Left cardiac atrium (tissue), 4 donors: ENCODE measurements at regions of chr6 and their contacts with region 1.

Region 1: DNA sequence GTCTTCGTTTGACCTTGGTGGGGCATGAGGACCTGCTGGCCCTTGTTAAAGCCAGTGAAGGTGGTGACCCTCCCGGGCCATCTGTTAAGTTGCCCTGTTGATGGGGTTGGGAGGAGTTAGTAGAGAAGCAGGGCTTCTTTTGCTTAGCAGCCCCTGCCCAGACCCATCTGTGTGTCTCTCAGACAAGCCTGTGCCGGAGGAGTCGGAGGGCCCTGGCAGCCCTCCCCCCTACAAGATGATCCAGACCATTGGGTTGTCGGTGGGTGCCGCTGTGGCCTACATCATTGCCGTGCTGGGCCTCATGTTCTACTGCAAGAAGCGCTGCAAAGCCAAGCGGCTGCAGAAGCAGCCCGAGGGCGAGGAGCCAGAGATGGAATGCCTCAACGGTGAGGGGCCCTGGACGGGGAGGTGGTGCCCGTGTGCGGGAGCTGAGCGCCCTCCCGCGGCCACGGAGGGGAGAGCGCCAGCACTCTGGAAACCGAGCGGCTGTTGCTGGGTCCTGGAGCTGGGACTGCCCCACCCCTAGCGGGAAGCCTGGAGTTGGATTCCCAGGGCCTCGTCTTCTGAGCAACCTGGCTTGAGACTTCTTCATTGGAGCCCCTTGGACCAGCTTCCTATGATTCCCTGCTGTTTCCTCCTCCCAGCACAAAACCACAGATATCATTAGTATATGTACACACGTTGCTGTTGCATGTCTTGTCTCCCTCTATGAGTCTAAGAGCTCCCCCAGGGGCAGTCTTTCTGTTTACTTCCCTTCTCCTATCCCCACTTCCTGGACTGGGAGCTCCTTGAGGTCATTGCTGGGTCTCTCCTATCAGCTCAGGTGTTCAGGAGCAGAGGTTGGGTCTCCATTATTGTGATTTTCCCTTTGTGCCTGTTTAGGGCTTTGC is 27.6 kb upstream of the SRF start:
- DNase-seq: peak; percentile 91
- ATAC-seq: peak; percentile 97

Region 2: GRCh38 chr6:42901536-42901957 is 241.9 kb before region 1 on chr6:
- intact Hi-C with region 1: loop called (anchors 2 to 5 kb)
- DNase-seq: peak; percentile 87
- ATAC-seq: peak; percentile 97 to 98

Region 3: GRCh38 chr6:42907336-42907735 is 236.1 kb before region 1 on chr6:
- intact Hi-C with region 1: loop called in 1 of 2 experiments (anchors 5 kb)
- DNase-seq: no peak
- ATAC-seq: peak; percentile 52 to 66

Region 4: DNA sequence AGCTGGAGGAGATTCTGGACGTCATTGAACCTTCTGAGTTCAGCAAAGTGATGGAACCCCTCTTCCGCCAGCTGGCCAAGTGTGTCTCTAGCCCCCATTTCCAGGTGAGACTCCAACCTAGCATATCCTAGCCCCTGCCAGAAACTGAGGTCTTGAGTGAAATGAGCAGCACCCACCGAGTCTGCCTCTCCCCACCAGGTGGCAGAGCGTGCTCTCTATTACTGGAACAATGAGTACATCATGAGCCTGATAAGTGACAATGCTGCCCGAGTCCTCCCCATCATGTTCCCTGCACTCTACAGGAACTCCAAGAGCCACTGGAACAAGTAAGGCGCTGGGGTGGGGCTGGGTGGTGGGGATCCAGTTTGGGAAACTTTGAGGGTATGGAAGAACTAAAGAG is 134.4 kb before region 1 on chr6:
- intact Hi-C with region 1: loop called (anchors 1 to 5 kb)
- DNase-seq: peak; percentile 54
- ATAC-seq: no peak

Region 5: DNA sequence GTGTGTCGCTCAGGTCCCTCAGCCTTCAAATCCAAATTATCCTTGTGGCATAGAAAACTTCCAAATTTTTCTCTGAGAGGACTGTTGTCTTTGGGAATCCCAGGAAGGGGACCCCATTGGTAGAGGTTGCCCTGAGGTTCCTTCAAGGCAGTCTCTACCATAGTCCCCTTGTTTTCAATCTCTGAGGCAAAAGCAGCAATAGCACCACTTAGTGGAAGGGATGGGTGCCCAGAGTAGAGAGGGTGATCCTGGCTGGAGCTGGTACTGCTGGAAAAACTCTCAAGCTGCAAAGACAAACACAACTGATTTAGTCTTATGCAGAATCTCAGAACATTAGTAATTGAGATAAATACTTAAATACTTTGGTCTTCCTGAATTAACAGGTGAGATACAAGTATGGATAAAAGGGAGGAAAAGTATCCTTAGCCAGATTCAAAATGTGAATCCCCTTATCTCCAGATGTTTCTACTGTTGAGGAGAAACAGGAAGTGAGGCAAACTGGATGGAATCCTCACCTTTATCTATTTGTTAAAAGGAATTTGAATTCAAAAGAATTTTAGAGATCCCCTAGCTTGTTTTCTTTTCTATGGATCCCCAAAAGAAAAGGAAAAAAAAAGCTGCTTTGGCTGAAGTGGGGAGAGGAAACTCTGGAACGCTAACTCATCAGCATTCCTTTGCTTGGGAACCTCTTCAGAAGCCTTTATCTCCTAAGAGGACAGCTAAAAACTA is 212.5 kb after region 1 on chr6:
- intact Hi-C with region 1: no loop called
- DNase-seq: no peak
- ATAC-seq: peak; percentile 44 to 58